ENCODE measurements at regions of chr17 and their contacts with region 1.

Region 1: GRCh38 chr17:43778337-43779144 is at the start of gene DUSP3:
- DNase-seq: peak; percentile 73
- H3K4me3 Mint-ChIP-seq: peak within 1 kb of the TSS; percentile 87
- H3K27ac Mint-ChIP-seq: peak within 1 kb of the TSS; percentile 76
- H3K4me1 Mint-ChIP-seq: peaks cover 7% of the 10 kb centered on the region
- H3K27me3 Mint-ChIP-seq: peaks cover 32% of the 10 kb centered on the region
- total RNA-seq, gene DUSP3: 11.7 and 12.0 TPM in 2 replicates

Region 2: DNA sequence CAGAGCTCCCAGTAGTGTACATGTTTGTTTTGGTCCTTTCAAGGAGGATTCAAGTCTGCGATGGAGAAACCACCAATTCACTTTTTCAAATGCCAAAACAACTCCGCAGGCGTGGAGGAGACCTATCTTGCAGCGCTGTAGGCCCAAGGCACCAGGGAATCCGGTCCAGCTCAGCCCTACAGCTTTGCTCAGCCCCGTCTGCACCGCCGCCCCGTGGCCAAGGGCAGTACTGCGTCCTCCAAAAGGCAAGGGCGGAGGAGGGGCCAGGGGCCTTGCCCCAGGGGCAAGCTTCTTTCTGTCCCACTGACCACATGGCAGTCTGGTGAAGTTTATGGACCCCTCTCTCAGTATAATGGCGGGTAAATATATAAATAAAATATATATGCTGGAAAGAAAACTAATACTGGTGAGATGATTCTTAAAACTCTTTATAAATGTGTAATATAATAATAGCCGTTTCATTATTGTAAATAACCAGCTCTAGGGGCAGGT is 67.7 kb after region 1 on chr17:
- intact Hi-C with region 1: loop called (anchors 1 kb)
- DNase-seq: peak; percentile 67
- H3K4me3 Mint-ChIP-seq: no peak overlapping the region
- H3K27ac Mint-ChIP-seq: no peak overlapping the region
- H3K4me1 Mint-ChIP-seq: no peaks in the 10 kb centered on the region
- H3K27me3 Mint-ChIP-seq: peaks cover 12% of the 10 kb centered on the region

Measured in activated T-helper 1 cell treated with anti-CD3 and anti-CD28 coated beads, Interleukin-12 subunit alpha, Interleukin-12 subunit beta, Interleukin-2, Interleukin-4 antibody, amounts not matched to agents 30 ng/mL and 10 ng/mL and 1 ng/mL, durations not matched to agents 14 hours and 24 hours and 36 hours (primary cell).